WTC11 (cell line): ENCODE measurements at regions of chr1 and their contacts with region 1.

Region 1: GRCh38 chr1:165367375-165367993 is 11.0 kb upstream of the LMX1A start:
- DNase-seq: peak; percentile 97
- ATAC-seq: peak; percentile 93
- H3K4me3 Mint-ChIP-seq: no peak overlapping the region
- H3K27ac Mint-ChIP-seq: no peak overlapping the region
- H3K4me1 Mint-ChIP-seq: peaks cover 12% of the 10 kb centered on the region
- H3K27me3 Mint-ChIP-seq: peaks cover 33% of the 10 kb centered on the region
- CTCF ChIP-seq: peak; percentile 95

Region 2: GRCh38 chr1:165129568-165130164 is 237.8 kb before region 1 on chr1:
- CTCF ChIA-PET with region 1: interaction called, 66 read pairs
- POLR2A ChIA-PET with region 1: no interaction called
- DNase-seq: peak; percentile 89
- ATAC-seq: peak; percentile 99
- H3K4me3 Mint-ChIP-seq: no peak overlapping the region
- H3K27ac Mint-ChIP-seq: no peak overlapping the region
- H3K4me1 Mint-ChIP-seq: peaks cover 2% of the 10 kb centered on the region; the same call in 1 of the 2 replicates
- H3K27me3 Mint-ChIP-seq: no peaks in the 10 kb centered on the region; the same call in 1 of the 2 replicates
- CTCF ChIP-seq: peak; percentile 40; the same call in 1 of the 2 replicates

Region 3: GRCh38 chr1:165248969-165249571 is 118.4 kb before region 1 on chr1:
- CTCF ChIA-PET with region 1: interaction called, 12 read pairs
- POLR2A ChIA-PET with region 1: no interaction called
- DNase-seq: no peak
- ATAC-seq: peak; percentile 67
- H3K4me3 Mint-ChIP-seq: no peak overlapping the region
- H3K27ac Mint-ChIP-seq: no peak overlapping the region
- H3K4me1 Mint-ChIP-seq: peaks cover 12% of the 10 kb centered on the region
- H3K27me3 Mint-ChIP-seq: no peaks in the 10 kb centered on the region; the same call in 1 of the 2 replicates
- CTCF ChIP-seq: no peak

Region 4: DNA sequence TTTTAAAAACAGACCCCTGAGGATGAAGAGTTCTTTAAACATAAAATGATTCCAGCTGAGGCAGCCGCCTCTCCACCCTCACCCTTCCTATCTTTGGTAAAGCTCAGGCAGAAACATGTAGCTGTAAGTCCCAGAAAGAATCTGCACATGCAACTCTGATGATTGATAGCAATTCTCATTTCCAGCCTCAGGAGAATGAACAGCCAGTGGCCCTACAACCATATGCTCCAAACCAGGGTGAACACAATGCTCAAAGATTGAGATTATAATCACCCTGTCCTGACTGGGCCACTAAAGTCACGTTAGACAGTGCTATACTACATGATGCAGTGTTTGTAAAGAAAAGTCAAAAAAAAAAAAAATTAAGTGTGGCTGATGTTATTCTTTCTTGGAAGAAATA is 91.2 kb before region 1 on chr1:
- CTCF ChIA-PET with region 1: interaction called, 15 read pairs
- POLR2A ChIA-PET with region 1: no interaction called
- DNase-seq: no peak
- ATAC-seq: no peak
- H3K4me3 Mint-ChIP-seq: no peak overlapping the region
- H3K27ac Mint-ChIP-seq: no peak overlapping the region
- H3K4me1 Mint-ChIP-seq: peaks cover 25% of the 10 kb centered on the region
- H3K27me3 Mint-ChIP-seq: no peaks in the 10 kb centered on the region
- CTCF ChIP-seq: no peak

Region 5: DNA sequence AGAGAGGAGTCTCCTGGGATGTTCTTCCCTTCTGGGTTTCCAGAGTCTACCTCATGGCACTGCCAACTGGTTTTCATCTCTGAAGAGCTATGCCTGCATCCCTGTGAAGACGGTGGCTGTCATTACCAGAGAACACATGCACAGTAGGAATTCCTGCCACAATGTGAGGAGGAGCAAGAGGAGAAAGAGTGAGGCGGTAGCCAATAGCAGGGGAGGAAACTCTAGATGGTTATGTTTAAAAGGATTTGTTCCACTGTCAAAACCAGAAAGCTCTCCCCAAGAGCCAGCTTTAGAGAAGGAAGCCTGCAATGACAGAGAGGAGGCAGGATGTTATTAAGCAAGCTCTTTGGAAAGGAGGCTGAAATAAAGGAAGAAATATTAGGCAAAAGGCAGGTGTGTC is 23.3 kb before region 1 on chr1:
- CTCF ChIA-PET with region 1: interaction called, 23 read pairs
- POLR2A ChIA-PET with region 1: no interaction called
- DNase-seq: no peak
- ATAC-seq: peak; percentile 72
- H3K4me3 Mint-ChIP-seq: no peak overlapping the region
- H3K27ac Mint-ChIP-seq: no peak overlapping the region
- H3K4me1 Mint-ChIP-seq: peaks cover 30% of the 10 kb centered on the region
- H3K27me3 Mint-ChIP-seq: peaks cover 33% of the 10 kb centered on the region
- CTCF ChIP-seq: no peak

Region 6: GRCh38 chr1:165383067-165383466 is 15.6 kb after region 1 on chr1:
- CTCF ChIA-PET with region 1: interaction called, 22 read pairs
- POLR2A ChIA-PET with region 1: no interaction called
- DNase-seq: no peak
- ATAC-seq: no peak; the same call in none of the 2 replicates
- H3K4me3 Mint-ChIP-seq: no peak overlapping the region
- H3K27ac Mint-ChIP-seq: no peak overlapping the region
- H3K4me1 Mint-ChIP-seq: peaks cover 7% of the 10 kb centered on the region
- H3K27me3 Mint-ChIP-seq: peaks cover 30% of the 10 kb centered on the region
- CTCF ChIP-seq: no peak

Region 7: DNA sequence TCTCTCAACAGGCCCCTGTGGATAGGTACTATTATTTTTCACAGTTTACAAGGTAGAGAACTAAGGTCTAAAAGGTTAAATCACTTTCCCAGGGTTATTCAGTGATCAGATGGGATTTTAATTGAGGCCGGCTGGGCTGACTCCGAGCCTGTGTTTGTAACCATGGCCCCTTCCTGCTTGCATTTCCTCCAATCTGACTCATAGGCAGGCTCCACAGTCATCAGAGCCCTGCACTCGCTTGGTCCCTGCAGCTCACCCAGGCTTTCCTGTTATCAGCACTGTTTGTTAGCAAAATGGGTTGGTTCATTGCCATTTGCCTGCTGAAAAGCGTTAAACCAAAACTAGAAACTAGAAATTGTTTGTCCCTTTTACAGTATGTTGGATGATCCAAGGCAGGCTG is 30.5 kb after region 1 on chr1:
- CTCF ChIA-PET with region 1: interaction called, 27 read pairs
- POLR2A ChIA-PET with region 1: no interaction called
- DNase-seq: no peak
- ATAC-seq: peak; percentile 46
- H3K4me3 Mint-ChIP-seq: no peak overlapping the region
- H3K27ac Mint-ChIP-seq: no peak overlapping the region
- H3K4me1 Mint-ChIP-seq: peaks cover 12% of the 10 kb centered on the region
- H3K27me3 Mint-ChIP-seq: peaks cover 9% of the 10 kb centered on the region
- CTCF ChIP-seq: no peak

Region 8: DNA sequence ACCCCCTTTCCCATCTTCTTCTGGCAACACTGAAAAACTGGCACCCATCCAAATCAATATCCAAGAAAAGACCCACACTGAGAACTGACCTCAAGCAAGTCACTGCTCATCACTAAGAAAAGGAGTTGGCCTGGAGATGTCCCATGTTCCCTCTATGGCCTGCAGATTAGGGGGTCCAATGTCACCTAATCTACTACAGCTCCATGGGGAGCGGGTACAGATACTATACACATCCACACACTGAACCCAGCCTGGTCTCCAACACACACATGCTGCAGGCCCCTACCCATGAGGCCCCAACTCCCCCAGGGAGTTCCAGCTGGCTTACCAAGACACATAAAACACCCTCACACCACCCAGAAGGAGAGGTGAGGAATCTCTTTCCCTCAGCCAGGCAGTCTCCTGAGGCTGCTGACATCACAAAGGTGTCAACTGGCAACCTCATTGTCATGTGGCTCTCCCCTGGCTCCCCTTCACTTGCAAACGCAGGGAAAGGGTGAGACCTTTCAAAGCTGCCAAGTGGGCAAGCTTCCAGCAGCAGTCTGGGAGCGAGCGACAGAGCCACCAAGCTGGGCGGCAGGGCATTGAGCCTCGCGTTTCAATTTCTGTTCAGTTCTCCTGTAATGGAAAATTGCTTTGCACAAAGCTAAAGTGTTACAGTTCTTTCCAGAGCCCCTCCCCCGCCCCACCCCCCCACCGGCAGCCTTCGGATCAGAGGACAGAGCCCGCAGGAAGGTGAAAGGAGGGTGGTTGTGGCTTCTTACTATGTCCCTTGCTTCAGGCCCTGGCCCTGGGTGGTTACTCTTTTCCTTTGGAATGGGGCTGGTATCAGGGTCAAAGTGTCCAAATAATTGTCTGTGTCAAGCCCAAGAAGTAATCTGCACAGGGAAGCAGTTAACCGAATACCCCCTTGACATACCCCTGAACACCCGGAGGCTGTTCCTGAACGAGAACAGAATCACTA is 176.3 kb after region 1 on chr1 and contains the start of gene LRRC52:
- CTCF ChIA-PET with region 1: no interaction called
- POLR2A ChIA-PET with region 1: no interaction called
- DNase-seq: peak; percentile 44
- ATAC-seq: peak; percentile 93
- H3K4me3 Mint-ChIP-seq: no peak within 1 kb of the TSS
- H3K27ac Mint-ChIP-seq: no peak within 1 kb of the TSS
- H3K4me1 Mint-ChIP-seq: peaks cover 12% of the 10 kb centered on the region
- H3K27me3 Mint-ChIP-seq: peaks cover 36% of the 10 kb centered on the region
- CTCF ChIP-seq: no peak
- total RNA-seq, gene LRRC52: 0.14 TPM in 1 of 3 replicates, not detected in the others